ENCODE measurements at regions of chr20 and their contacts with region 1.

Region 1: DNA sequence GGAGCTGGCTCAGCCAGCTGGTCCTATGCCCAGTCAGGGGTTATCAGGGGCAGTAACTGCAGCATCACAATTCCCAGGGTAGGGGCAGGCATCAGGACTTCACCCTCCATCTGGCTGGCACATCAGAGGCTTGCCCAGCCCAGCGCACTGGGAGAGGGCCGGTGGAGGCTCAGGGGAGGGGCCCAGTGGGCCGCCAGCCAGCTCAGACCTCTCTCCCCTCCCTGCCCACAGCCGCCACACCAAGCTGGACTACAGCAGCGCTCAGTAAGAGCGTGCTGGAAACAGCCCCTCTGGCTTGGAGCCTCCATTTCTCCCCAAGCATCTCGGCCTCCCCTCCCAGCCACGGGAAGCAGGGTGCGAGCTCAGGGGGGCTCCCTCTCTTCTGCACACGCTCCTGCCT is 22.0 kb downstream of the ADA start:
- DNase-seq: no peak
- ATAC-seq: no peak
- H3K4me3 ChIP-seq: no peak overlapping the region
- H3K27ac ChIP-seq: no peak overlapping the region
- H3K4me1 ChIP-seq: no peaks in the 10 kb centered on the region
- CTCF ChIP-seq: no peak
- EP300 ChIP-seq: no peak
- POLR2A ChIP-seq: no peak
- RAD21 ChIP-seq: no peak

Region 2: DNA sequence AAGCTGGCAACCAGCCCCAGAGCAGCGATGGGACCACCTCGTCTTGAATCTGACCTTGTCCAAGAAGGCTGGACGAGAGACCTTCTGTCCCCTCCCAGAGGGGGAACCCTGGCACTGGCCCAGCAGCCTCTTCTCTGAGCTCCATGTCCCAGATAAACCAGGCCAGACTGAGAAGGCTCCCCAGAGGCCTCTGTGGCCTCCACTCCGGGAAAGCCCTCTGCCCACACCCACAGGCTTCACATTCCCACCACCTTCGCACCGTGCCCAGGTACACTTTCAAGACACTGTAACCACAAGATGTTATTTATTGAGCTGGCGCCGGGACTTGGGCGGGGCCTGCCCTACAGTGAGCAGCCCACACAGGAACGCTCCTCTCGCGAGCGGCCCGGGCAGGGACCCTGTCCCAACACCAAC is 11.2 kb before region 1 on chr20:
- CTCF ChIA-PET with region 1: interaction called, 11 read pairs
- POLR2A ChIA-PET with region 1: no interaction called
- DNase-seq: no peak
- ATAC-seq: no peak
- H3K4me3 ChIP-seq: no peak overlapping the region
- H3K27ac ChIP-seq: no peak overlapping the region
- H3K4me1 ChIP-seq: no peaks in the 10 kb centered on the region
- CTCF ChIP-seq: no peak
- EP300 ChIP-seq: no peak
- POLR2A ChIP-seq: no peak
- RAD21 ChIP-seq: no peak

Region 3: GRCh38 chr20:44664131-44664530 is 34.6 kb after region 1 on chr20:
- CTCF ChIA-PET with region 1: no interaction called
- POLR2A ChIA-PET with region 1: no interaction called
- DNase-seq: no peak
- ATAC-seq: no peak
- H3K4me3 ChIP-seq: no peak overlapping the region
- H3K27ac ChIP-seq: no peak overlapping the region
- H3K4me1 ChIP-seq: no peaks in the 10 kb centered on the region
- CTCF ChIP-seq: no peak
- EP300 ChIP-seq: no peak
- POLR2A ChIP-seq: no peak
- RAD21 ChIP-seq: no peak

Measured in A549 (cell line).